ENCODE measurements at regions of chr9 and their contacts with region 1.

Region 1: DNA sequence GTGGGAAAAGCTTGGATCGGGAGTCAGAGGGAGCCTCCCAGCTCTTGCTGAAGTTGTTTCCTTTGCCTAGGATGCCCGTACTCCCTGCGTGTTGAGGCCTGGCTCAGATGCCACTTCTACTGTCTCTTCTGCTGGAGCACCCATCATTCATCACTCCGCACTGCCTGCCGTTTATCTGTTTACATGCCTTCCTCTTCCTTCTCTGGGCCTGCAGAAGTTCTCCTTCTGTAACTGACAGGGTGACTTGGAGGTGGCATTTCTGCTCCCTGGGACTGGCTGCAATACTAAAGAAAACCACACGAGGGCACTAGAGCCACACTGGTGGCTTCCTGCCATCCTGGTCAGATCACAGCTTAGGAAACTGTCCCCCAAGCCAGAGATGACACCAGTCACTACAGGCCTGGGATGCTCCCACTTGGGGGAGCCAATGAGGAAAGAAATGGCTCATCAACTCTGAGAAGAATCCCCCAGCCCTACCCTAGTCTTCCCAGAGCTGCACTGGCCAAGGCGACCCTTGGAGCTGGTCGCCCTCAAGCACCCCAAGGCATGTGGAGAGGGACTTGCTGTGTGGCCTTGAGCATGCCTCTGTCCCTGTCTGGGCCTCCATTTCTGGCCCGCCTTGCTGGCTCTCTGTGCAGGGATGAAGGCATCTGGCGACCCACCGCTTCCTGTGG is 9.7 kb upstream of the SLC25A51 start:
- DNase-seq: peak; percentile 71
- ATAC-seq: peak; percentile 94
- H3K4me3 ChIP-seq: no peak overlapping the region
- H3K27ac ChIP-seq: no peak overlapping the region; the same call in 1 of the 2 replicates
- H3K4me1 ChIP-seq: peaks cover 0 to 5% of the 10 kb centered on the region in 2 experiments; a peak in 1 of 4 replicates
- H3K27me3 ChIP-seq: no peaks in the 10 kb centered on the region
- CTCF ChIP-seq: peak; percentile 96 to 99 (median 98)
- POLR2A ChIP-seq: no peak
- RAD21 ChIP-seq: peak; percentile 100

Region 2: DNA sequence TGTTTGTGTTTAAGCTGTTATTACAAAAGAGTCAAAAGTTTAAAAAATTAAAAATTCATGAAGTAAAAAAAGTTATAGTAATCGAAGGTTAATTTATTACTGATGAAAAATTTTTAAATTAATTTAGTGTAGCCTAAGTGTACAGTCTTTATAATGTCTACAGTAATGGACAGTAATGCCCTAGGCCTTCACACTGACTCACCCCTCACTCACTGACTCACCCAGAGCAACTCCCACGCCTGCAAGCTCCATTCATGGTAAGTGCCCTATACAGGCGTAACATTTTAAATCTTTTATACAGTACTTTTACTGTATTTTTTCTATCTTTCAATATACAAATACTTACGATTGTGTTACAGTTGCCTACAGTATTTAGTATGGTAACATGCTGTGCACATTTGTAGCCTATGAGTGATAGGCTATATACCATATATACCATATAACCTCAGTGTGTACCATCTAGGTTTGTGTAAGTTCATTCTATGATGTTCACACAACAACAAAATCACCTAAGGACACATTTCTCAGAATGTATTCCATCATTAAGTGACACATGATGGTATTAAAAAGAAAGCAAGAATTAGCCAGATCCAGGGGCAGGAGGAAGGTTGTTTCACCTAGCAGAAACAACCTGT is 72.9 kb before region 1 on chr9:
- CTCF ChIA-PET with region 1: no interaction called
- POLR2A ChIA-PET with region 1: no interaction called
- RAD21 ChIA-PET with region 1: no interaction called
- intact Hi-C with region 1: no loop called
- DNase-seq: peak; percentile 1
- ATAC-seq: peak; percentile 57; the same call in 1 of the 2 replicates
- H3K4me3 ChIP-seq: no peak overlapping the region
- H3K27ac ChIP-seq: no peak overlapping the region
- H3K4me1 ChIP-seq: peaks cover 0 to 5% of the 10 kb centered on the region in 2 experiments; a peak in 1 of 4 replicates
- H3K27me3 ChIP-seq: no peaks in the 10 kb centered on the region
- CTCF ChIP-seq: no peak
- POLR2A ChIP-seq: no peak
- RAD21 ChIP-seq: no peak

Region 3: GRCh38 chr9:37929441-37929895 is 15.9 kb after region 1 on chr9:
- CTCF ChIA-PET with region 1: interaction called, 10 read pairs
- POLR2A ChIA-PET with region 1: no interaction called
- RAD21 ChIA-PET with region 1: interaction called in 1 of 2 experiments, 3 read pairs
- intact Hi-C with region 1: no loop called
- DNase-seq: peak; percentile 58
- ATAC-seq: peak; percentile 80
- H3K4me3 ChIP-seq: no peak overlapping the region
- H3K27ac ChIP-seq: peak overlapping the region; percentile 77
- H3K4me1 ChIP-seq: peaks cover 46 to 62% of the 10 kb centered on the region in 2 experiments
- H3K27me3 ChIP-seq: no peaks in the 10 kb centered on the region
- CTCF ChIP-seq: no peak
- POLR2A ChIP-seq: no peak
- RAD21 ChIP-seq: no peak

Region 4: GRCh38 chr9:37966412-37967271 is 53.0 kb after region 1 on chr9:
- CTCF ChIA-PET with region 1: interaction called, 3 read pairs
- POLR2A ChIA-PET with region 1: no interaction called
- RAD21 ChIA-PET with region 1: no interaction called
- intact Hi-C with region 1: loop called (anchors 5 kb)
- DNase-seq: no peak
- ATAC-seq: 0 out of 2 replicates have a peak, but pooled peaks have one; percentile 7
- H3K4me3 ChIP-seq: no peak overlapping the region
- H3K27ac ChIP-seq: peak overlapping the region; percentile 11; the same call in 1 of the 2 replicates
- H3K4me1 ChIP-seq: peaks cover 58 to 80% of the 10 kb centered on the region in 2 experiments
- H3K27me3 ChIP-seq: no peaks in the 10 kb centered on the region
- CTCF ChIP-seq: no peak
- POLR2A ChIP-seq: no peak
- RAD21 ChIP-seq: no peak

Region 5: DNA sequence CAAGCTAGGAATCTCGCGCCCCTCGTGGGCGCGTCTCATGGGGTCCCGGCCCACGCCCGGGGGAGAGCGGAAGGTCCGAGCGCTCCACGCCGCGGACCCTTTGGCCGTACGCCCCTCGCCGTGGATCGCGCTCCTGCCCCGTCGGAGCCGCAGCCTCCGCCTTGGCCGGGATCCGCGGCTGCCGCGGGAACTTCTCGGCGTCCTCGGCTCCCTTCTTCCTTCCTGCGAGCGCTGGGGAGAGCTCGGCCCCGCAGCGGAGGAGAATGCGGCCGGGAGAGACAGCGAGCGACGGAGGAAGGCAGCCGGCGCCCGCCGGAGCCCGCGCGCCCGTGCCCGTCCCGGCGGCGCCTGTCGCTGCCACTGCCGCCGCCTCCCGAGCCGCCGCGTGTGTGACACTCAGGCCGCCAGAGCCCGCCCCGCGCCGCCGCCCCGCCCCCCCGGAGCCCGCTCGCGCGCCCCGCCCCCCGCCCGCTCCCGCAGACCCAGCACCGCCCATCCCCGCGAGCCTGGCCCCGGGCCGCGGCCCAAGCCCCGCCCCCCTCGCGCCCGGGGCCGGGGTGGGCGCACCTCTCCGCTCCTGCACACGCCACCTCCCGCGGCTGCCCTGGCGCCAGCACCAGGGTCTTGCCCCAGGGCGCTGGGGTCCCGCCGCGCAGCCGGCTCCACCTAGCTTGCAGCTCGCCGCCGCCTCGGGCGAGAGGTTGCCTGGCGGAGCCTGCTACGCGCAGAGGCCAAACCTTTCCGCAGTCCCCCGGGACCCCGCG is 155.4 kb after region 1 on chr9 and contains the start of gene SHB:
- CTCF ChIA-PET with region 1: no interaction called
- POLR2A ChIA-PET with region 1: no interaction called
- RAD21 ChIA-PET with region 1: no interaction called
- intact Hi-C with region 1: loop called (anchors 1 kb)
- DNase-seq: no peak
- ATAC-seq: peak; percentile 74
- H3K4me3 ChIP-seq: peak within 1 kb of the TSS; percentile 66 to 84
- H3K27ac ChIP-seq: peak within 1 kb of the TSS; percentile 98
- H3K4me1 ChIP-seq: peaks cover 37 to 52% of the 10 kb centered on the region in 2 experiments; a peak in 3 of 4 replicates
- H3K27me3 ChIP-seq: no peaks in the 10 kb centered on the region
- CTCF ChIP-seq: peak in 1 of 3 experiments; percentile 33; a peak in 1 of 6 replicates
- POLR2A ChIP-seq: peak; percentile 62
- RAD21 ChIP-seq: no peak
- total RNA-seq, gene SHB: 28.7 TPM

Region 6: DNA sequence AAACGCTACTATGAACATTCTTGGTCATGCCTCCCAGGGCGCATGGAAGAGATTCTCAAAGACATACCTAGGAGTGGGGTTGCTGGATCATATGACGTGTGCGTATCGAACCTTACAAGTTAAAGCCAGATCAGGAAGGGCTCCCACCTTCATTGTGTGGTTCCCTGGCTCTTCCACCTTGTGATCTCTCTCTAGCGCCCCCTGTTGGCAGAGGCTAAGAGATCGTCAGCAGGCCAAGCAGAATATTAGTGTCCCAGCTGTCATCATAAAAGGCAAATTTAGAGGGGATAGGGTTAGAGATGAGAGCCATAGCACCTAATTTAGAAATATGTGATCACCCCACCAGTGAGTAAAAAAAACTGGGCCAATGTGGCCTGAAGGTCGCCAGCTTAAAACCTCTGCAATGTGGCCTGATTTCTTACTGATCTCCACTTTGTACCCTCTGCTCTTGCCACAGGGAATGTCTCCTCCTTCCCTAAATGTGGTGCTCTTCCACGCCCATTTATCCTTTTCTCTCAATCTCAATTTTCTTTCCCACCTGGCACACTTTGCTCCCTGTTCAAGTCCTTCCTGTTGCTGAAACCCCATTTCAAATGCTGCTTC is 247.1 kb after region 1 on chr9:
- CTCF ChIA-PET with region 1: interaction called, 3 read pairs
- POLR2A ChIA-PET with region 1: no interaction called
- RAD21 ChIA-PET with region 1: no interaction called
- intact Hi-C with region 1: loop called (anchors 1 kb)
- DNase-seq: peak; percentile 69
- ATAC-seq: peak; percentile 97
- H3K4me3 ChIP-seq: no peak overlapping the region
- H3K27ac ChIP-seq: no peak overlapping the region
- H3K4me1 ChIP-seq: 0 out of 4 replicates have a peak, but pooled peaks cover 0 to 2% of the 10 kb centered on the region in 2 experiments
- H3K27me3 ChIP-seq: no peaks in the 10 kb centered on the region
- CTCF ChIP-seq: peak; percentile 71 to 96 (median 92)
- POLR2A ChIP-seq: no peak
- RAD21 ChIP-seq: peak; percentile 70

Region 7: DNA sequence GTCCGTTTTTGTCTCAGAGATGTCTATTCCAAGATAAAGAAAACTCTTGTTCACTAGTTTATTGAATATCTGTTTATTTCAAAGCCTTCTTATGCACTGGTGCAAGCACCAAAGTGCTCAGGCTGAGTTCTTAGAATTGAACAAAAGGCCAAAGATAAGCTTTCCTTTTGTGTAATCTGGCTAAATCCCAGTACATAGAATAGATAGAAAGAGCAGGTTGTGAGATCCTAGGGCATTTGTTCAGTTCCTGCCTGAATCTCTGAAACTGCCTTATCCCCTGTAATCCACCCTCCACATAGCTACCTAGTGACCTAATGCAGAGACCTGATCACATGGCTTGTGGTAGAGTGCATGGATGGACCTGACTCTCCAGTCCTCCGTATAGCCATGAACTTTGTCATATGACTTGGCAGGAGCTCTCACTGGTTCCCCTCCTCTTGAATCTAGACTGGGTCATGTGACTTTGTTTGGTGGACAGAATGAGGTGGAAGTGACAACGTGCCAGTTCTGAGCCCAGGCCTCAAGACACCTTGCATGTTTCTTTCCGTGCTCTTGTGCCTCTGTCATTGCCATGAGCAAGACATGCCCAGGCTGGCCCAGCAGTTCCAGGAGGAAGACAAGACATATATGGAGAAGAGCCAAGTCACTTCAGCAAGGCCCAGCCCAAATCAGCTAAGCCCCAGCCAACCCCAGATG is 294.7 kb after region 1 on chr9:
- CTCF ChIA-PET with region 1: no interaction called
- POLR2A ChIA-PET with region 1: no interaction called
- RAD21 ChIA-PET with region 1: no interaction called
- intact Hi-C with region 1: no loop called
- DNase-seq: no peak
- ATAC-seq: no peak
- H3K4me3 ChIP-seq: no peak overlapping the region
- H3K27ac ChIP-seq: no peak overlapping the region
- H3K4me1 ChIP-seq: peaks cover 0 to 23% of the 10 kb centered on the region in 2 experiments; a peak in 2 of 4 replicates
- H3K27me3 ChIP-seq: no peaks in the 10 kb centered on the region
- CTCF ChIP-seq: no peak
- POLR2A ChIP-seq: no peak
- RAD21 ChIP-seq: no peak

Region 8: DNA sequence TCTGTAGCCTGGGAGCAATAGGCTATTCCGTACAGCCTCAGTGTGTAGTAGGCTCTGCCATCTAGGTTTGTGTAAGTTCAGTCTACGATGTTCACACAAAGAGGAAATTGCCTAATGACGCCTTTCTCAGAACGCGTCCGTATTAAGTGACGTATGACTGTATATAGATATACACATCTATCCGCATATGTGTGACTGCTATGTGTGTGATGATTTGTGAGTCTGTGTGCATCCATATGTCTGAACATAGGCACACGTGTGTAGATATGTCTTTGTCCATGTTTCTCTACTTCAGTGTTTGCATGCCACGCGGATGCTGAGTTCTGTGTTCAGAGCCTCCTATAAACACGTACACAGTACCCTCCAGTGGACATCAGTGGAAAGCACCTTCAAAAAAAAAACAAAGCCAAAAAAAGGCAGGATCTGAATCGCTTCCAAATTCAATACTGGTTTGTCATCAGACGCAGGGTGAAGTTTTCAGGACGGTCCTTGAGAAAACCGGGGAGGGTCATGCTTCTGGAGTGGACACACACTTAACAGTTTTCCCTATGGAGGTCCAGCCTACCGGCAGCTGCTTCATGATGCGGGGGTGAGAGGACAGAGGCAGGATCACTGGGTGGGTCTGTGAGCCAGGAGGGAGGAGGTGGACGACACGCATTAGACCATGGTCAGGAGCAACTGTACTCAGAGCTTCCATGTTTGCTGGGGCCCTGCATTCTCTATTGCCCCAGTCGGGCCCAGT is 449.4 kb after region 1 on chr9:
- CTCF ChIA-PET with region 1: interaction called, 6 read pairs
- POLR2A ChIA-PET with region 1: no interaction called
- RAD21 ChIA-PET with region 1: no interaction called
- intact Hi-C with region 1: loop called (anchors 1 kb)
- DNase-seq: peak; percentile 63
- ATAC-seq: peak; percentile 82
- H3K4me3 ChIP-seq: no peak overlapping the region
- H3K27ac ChIP-seq: no peak overlapping the region
- H3K4me1 ChIP-seq: peaks cover 0 to 5% of the 10 kb centered on the region in 2 experiments; a peak in 2 of 4 replicates
- H3K27me3 ChIP-seq: no peaks in the 10 kb centered on the region
- CTCF ChIP-seq: peak; percentile 59 to 89 (median 73)
- POLR2A ChIP-seq: no peak
- RAD21 ChIP-seq: peak; percentile 97